Activated CD4-positive, alpha-beta T cell treated with anti-CD3 and anti-CD28 coated beads, Interleukin-2, amount 10 ng/mL, durations not matched to agents 24 days and 14 days (primary cell): ENCODE measurements at regions of chr2 and their contacts with region 1.

Region 1: GRCh38 chr2:156892467-156893281 is 364.8 kb upstream of the GALNT5 start:
- DNase-seq: peak; percentile 66
- H3K4me3 Mint-ChIP-seq: peak overlapping the region; percentile 25
- H3K27ac Mint-ChIP-seq: no peak overlapping the region
- H3K4me1 Mint-ChIP-seq: peaks cover 33% of the 10 kb centered on the region
- H3K27me3 Mint-ChIP-seq: peaks cover 52% of the 10 kb centered on the region

Region 2: DNA sequence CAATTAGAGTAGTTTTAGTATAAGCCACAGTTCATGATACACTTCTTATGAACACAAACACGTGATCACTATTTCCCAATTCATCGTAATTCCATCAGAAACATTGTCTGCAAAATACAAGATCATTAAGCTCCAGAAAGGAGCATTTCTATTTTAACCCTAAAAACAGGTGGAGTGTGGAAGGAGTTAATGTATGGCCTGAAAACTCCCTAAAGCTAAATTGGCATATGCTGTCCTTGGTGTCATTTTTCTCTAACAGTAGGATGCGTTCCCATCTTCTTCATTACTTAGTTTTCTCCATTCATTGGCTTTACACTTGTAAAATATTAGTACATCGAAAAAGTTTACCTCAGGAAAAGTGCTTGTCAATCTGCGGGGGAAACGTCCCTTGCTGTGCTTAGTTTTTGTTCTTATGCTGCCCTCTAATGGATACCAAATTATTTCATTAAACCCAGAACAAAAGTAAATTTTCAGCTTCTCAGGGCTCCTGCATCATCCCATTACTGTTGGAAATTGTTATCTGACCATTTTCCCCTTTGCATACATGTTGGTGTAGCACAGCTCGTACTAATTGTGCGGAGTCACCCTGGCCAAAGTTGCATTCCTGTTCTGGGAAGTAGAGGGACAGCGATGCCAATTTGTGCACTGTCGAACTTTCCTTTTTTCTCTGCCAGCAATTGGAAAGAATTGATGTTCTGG is 303.1 kb before region 1 on chr2:
- intact Hi-C with region 1: loop called (anchors 5 kb)
- DNase-seq: peak; percentile 64
- H3K4me3 Mint-ChIP-seq: no peak overlapping the region
- H3K27ac Mint-ChIP-seq: no peak overlapping the region
- H3K4me1 Mint-ChIP-seq: peaks cover 8% of the 10 kb centered on the region
- H3K27me3 Mint-ChIP-seq: no peaks in the 10 kb centered on the region

Region 3: DNA sequence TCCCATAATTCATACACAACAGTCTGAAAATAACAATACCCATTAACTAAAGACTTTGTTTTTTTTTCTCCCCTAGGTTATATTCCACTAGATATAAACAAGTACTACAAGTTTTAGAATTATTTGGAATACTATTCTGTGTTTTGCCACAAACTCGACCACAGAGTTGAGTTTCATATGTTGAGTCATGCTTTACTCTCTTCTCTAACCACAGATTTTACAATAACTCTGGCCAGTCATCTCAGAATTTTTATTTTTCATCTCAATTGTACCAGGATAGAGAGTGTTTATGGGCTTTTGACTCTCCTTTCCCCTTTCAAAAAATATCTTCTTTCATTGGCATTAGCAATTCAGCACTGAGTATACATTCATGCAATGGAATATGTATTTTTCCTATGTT is 16.2 kb after region 1 on chr2:
- intact Hi-C with region 1: loop called (anchors 1 kb)
- DNase-seq: no peak
- H3K4me3 Mint-ChIP-seq: no peak overlapping the region
- H3K27ac Mint-ChIP-seq: no peak overlapping the region
- H3K4me1 Mint-ChIP-seq: peaks cover 7% of the 10 kb centered on the region
- H3K27me3 Mint-ChIP-seq: peaks cover 26% of the 10 kb centered on the region

Region 4: GRCh38 chr2:157194097-157194688 is 301.5 kb after region 1 on chr2:
- intact Hi-C with region 1: loop called (anchors 5 kb)
- DNase-seq: peak; percentile 66
- H3K4me3 Mint-ChIP-seq: no peak overlapping the region
- H3K27ac Mint-ChIP-seq: no peak overlapping the region
- H3K4me1 Mint-ChIP-seq: peaks cover 9% of the 10 kb centered on the region
- H3K27me3 Mint-ChIP-seq: peaks cover 22% of the 10 kb centered on the region